Activated T-helper 1 cell treated with anti-CD3 and anti-CD28 coated beads, Interleukin-12 subunit alpha, Interleukin-12 subunit beta, Interleukin-2, Interleukin-4 antibody, amounts not matched to agents 30 ng/mL and 10 ng/mL and 1 ng/mL, durations not matched to agents 14 hours and 24 hours and 36 hours (primary cell): ENCODE measurements at regions of chr19 and their contacts with region 1.

Region 1: GRCh38 chr19:860481-861101 is 1.1 kb downstream of the CFD start:
- DNase-seq: peak; percentile 36
- H3K4me3 Mint-ChIP-seq: no peak overlapping the region
- H3K27ac Mint-ChIP-seq: no peak overlapping the region
- H3K4me1 Mint-ChIP-seq: peaks cover 7% of the 10 kb centered on the region
- H3K27me3 Mint-ChIP-seq: peaks cover 13% of the 10 kb centered on the region

Region 2: DNA sequence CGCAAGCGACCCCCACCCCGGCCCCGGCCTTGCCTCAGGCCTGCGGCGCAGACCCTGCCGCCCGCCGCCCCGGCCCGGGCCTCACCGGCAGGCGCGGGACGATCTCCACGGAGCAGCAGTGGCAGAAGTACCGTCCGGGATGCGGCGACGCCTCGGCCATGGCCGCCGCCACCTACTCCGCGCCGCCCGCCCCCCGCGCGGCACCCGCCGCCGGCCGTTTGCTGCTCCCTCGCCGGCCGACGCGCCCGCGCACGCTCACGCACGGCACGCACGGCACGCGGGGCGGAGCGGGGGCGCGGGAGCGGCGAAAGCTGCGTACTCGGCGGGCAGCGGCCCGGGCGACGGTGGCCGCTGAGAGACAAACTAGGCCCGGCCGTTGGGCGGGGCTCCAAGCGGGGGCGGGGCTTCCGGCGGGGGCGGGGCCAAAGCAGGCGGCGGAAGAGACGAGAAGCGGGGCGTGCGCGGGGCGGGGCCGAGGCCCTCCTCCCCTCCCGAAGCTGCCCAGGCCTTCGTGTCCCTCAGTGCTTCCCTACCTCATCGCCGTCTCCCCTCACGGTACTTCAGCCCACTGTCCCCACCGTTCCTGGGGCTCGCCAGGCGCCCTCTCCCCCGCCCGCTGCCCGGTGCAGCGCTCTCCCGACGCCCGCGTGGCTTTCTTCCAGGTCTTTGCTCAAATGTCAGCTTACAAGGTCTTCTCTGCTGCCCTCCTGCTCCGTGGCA is 197.5 kb before region 1 on chr19 and contains the start of gene RNF126:
- intact Hi-C with region 1: loop called (anchors 5 kb)
- DNase-seq: peak; percentile 84
- H3K4me3 Mint-ChIP-seq: peak within 1 kb of the TSS; percentile 95
- H3K27ac Mint-ChIP-seq: peak within 1 kb of the TSS; percentile 97
- H3K4me1 Mint-ChIP-seq: peaks cover 33% of the 10 kb centered on the region
- H3K27me3 Mint-ChIP-seq: no peaks in the 10 kb centered on the region
- total RNA-seq, gene RNF126: 107 and 110 TPM in 2 replicates

Region 3: DNA sequence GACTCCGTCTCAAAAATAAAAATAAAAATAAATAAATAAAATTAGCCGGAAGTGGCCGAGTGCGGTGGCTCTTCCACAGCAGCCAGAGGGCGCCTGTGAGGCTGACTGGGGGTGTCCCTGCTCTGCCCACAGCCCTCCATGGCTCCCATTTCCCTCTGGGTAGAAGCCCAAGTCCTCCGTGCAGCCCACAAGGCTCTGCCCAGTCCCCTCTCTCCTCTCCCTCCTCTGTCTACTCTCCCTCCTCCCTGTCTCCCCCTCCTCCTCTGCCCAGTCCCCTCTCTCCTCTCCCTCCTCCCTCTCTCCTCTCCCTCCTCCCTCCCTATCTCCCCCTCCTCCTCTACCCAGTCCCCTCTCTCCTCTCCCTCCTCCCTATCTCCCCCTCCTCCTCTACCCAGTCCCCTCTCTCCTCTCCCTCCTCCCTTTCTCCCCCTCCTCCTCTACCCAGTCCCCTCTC is 89.2 kb before region 1 on chr19:
- intact Hi-C with region 1: loop called (anchors 5 kb)
- DNase-seq: no peak
- H3K4me3 Mint-ChIP-seq: no peak overlapping the region
- H3K27ac Mint-ChIP-seq: no peak overlapping the region
- H3K4me1 Mint-ChIP-seq: peaks cover 5% of the 10 kb centered on the region
- H3K27me3 Mint-ChIP-seq: peaks cover 6% of the 10 kb centered on the region

Region 4: GRCh38 chr19:872266-872951 is 11.8 kb after region 1 on chr19:
- intact Hi-C with region 1: loop called (anchors 1 kb)
- DNase-seq: peak; percentile 84
- H3K4me3 Mint-ChIP-seq: peak overlapping the region; percentile 69
- H3K27ac Mint-ChIP-seq: peak overlapping the region; percentile 68
- H3K4me1 Mint-ChIP-seq: no peaks in the 10 kb centered on the region
- H3K27me3 Mint-ChIP-seq: no peaks in the 10 kb centered on the region

Region 5: DNA sequence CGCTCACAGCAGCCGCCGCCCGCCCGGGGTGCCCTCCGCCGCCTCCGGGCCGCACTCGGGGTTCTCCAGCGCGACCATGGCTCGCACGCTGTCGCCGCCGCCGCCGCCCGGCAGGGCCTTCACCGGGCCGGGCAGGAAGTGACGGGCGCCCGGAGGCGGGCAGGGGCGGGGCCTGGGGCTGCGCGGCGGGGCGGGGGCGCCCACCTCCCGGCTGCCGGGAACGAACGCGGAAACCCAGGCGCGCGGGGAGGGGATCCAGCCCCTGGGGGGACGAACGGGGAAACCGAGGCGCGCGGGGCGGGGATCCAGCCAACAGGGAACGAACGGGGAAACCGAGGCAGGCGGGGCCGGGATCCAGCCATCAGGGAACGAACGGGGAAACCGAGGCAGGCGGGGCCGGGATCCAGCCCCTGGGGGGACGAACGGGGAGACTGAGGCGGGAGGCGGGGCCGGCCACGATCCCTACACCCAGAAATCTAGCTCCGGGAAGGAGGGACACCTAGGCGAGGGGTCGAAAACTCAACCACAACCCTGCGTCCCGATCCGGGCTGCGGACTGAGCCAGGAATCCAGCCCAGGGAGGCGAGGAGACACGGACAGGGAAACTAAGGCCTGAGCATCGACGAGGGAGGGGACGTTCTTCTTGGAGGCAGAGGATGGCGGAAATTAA is 52.6 kb after region 1 on chr19 and contains the start of gene R3HDM4:
- intact Hi-C with region 1: loop called (anchors 2 kb)
- DNase-seq: peak; percentile 81
- H3K4me3 Mint-ChIP-seq: peak within 1 kb of the TSS; percentile 85
- H3K27ac Mint-ChIP-seq: peak within 1 kb of the TSS; percentile 89
- H3K4me1 Mint-ChIP-seq: peaks cover 19% of the 10 kb centered on the region
- H3K27me3 Mint-ChIP-seq: peaks cover 2% of the 10 kb centered on the region
- total RNA-seq, gene R3HDM4: 94.3 and 96.4 TPM in 2 replicates

Region 6: GRCh38 chr19:984165-984967 is 123.8 kb after region 1 on chr19 and contains the start of gene WDR18:
- intact Hi-C with region 1: loop called (anchors 2 kb)
- DNase-seq: peak; percentile 89
- H3K4me3 Mint-ChIP-seq: peak within 1 kb of the TSS; percentile 96
- H3K27ac Mint-ChIP-seq: peak within 1 kb of the TSS; percentile 91
- H3K4me1 Mint-ChIP-seq: no peaks in the 10 kb centered on the region
- H3K27me3 Mint-ChIP-seq: peaks cover 5% of the 10 kb centered on the region
- total RNA-seq, gene WDR18: 105 and 108 TPM in 2 replicates

Region 7: DNA sequence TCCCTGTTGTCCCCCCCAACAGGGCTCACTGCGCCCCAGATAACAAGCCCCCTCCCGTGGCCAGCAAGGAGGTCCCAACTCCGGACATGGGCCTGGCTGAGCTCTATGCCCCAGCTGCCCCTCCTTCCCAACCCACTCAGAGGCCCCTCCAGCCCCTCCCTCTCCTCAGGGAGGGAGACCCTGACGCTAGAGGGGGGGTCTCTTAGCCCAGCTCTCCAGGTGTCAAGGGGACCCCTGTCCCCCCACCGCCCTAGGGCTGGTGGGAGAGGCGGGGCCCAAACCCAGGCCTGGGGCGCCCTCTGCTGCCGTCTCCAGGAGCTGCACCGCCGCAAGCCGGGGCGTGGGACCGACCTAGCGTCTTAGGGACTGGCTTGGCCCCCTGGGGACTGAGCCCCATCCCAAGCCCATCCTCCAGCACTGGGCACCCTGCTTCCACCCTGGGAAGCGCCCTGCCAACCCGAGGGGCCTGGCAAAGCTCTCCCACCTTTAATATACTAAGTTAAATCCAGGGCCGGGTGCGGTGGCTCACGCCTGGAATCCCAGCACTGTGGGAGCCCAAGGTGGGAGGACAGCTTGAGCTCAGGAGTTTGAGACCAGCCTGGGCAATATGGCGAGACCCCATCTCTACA is 141.1 kb after region 1 on chr19:
- intact Hi-C with region 1: loop called (anchors 2 kb)
- DNase-seq: peak; percentile 58
- H3K4me3 Mint-ChIP-seq: no peak overlapping the region
- H3K27ac Mint-ChIP-seq: no peak overlapping the region
- H3K4me1 Mint-ChIP-seq: peaks cover 5% of the 10 kb centered on the region
- H3K27me3 Mint-ChIP-seq: peaks cover 33% of the 10 kb centered on the region

Region 8: GRCh38 chr19:1213391-1214286 is 353.0 kb after region 1 on chr19:
- intact Hi-C with region 1: no loop called
- DNase-seq: peak; percentile 58
- H3K4me3 Mint-ChIP-seq: peak overlapping the region; percentile 78
- H3K27ac Mint-ChIP-seq: peak overlapping the region; percentile 95
- H3K4me1 Mint-ChIP-seq: peaks cover 18% of the 10 kb centered on the region
- H3K27me3 Mint-ChIP-seq: no peaks in the 10 kb centered on the region